Activated CD8-positive, alpha-beta T cell treated with anti-CD3 and anti-CD28 coated beads, Interleukin-2, amount 10 ng/mL, durations not matched to agents 7 days and 5 days (primary cell): ENCODE measurements at regions of chr5 and their contacts with region 1.

Region 1: GRCh38 chr5:39716528-39717028 is 291.8 kb upstream of the DAB2 start:
- DNase-seq: peak; percentile 35
- ATAC-seq: peak; percentile 58
- H3K4me3 Mint-ChIP-seq: no peak overlapping the region
- H3K27ac Mint-ChIP-seq: no peak overlapping the region
- H3K4me1 Mint-ChIP-seq: no peaks in the 10 kb centered on the region
- H3K27me3 Mint-ChIP-seq: peaks cover 2% of the 10 kb centered on the region

Region 2: DNA sequence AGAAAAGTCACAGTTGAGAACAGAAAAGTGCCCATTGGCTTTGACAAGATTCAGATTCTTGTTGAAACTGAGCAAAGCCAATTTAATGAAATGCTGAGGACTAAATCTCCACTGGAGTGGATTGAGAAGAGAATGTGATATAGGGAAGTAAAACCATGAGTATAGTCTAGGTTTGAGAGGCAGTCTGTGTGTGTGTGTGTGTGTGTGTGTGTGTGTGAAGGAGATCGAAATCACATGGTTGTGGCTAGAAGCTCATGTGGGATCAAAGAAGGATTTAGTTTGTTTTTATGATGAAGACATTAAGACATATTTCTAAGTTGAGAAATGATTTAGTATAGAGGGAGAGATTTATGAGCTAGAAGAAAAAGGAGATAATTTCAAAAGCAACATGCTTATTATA is 16.1 kb before region 1 on chr5:
- CTCF ChIA-PET with region 1: interaction called, 10 read pairs
- POLR2A ChIA-PET with region 1: no interaction called
- DNase-seq: no peak
- ATAC-seq: no peak
- H3K4me3 Mint-ChIP-seq: no peak overlapping the region
- H3K27ac Mint-ChIP-seq: no peak overlapping the region
- H3K4me1 Mint-ChIP-seq: no peaks in the 10 kb centered on the region
- H3K27me3 Mint-ChIP-seq: peaks cover 5% of the 10 kb centered on the region

Region 3: DNA sequence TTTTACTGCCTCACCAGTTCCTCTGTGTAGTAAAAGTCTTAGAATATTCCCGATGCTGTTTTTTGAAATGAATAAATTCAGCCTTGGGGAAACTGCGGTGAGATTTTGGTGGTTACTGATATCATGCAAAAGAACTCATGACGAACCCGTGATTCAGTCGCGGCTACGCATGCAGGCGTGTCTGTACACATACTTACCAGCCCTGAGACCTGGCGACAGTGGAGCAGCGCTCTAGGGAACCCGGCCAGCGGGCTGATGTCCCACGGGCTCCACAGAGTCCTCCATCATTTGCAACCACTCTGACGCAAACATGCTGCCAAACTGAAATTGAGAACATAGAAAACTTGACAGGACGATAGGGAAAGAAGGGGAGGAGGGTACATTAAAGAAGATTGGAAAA is 23.8 kb after region 1 on chr5:
- CTCF ChIA-PET with region 1: no interaction called
- POLR2A ChIA-PET with region 1: no interaction called
- DNase-seq: no peak
- ATAC-seq: no peak
- H3K4me3 Mint-ChIP-seq: no peak overlapping the region
- H3K27ac Mint-ChIP-seq: no peak overlapping the region
- H3K4me1 Mint-ChIP-seq: no peaks in the 10 kb centered on the region
- H3K27me3 Mint-ChIP-seq: peaks cover 7% of the 10 kb centered on the region